ENCODE measurements at regions of chr7 and their contacts with region 1.

Region 1: GRCh38 chr7:27179503-27180430 is 5.3 kb downstream of the HOXA11 start:
- DNase-seq: peak; percentile 76
- CTCF ChIP-seq: peak; percentile 66

Region 2: GRCh38 chr7:27150568-27151340 is 29.0 kb before region 1 on chr7:
- CTCF ChIA-PET with region 1: interaction called, 15 read pairs
- POLR2A ChIA-PET with region 1: no interaction called
- DNase-seq: peak; percentile 87
- CTCF ChIP-seq: peak; percentile 93

Region 3: DNA sequence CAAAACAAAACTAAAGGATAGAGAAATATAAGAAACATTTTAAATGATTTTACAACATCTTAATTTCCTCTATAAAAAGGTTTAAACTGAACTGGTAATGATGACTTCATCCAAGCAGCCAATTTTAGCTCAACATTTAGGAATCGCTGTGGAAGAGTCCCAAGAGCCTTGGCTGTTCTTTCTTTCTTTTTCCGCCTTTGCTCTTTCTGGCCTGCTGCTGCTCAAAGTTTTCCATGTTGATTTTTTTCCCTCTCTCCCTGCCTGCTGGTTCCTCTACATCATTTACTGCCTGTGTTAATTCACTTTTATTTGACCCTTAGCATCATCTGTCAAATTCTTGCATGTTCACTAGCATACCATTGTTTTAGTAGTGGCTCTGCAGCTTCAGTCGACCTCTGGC is 209.7 kb after region 1 on chr7:
- CTCF ChIA-PET with region 1: no interaction called
- POLR2A ChIA-PET with region 1: no interaction called
- DNase-seq: no peak
- CTCF ChIP-seq: no peak